Endothelial cell of umbilical vein (primary cell): ENCODE measurements at regions of chr7 and their contacts with region 1.

Region 1: GRCh38 chr7:15720849-15721471 is 34.5 kb upstream of the MEOX2 start:
- DNase-seq: peak; percentile 84
- H3K4me3 ChIP-seq: no peak overlapping the region
- H3K27ac ChIP-seq: peak overlapping the region; percentile 11
- H3K4me1 ChIP-seq: peaks cover 17% of the 10 kb centered on the region
- H3K27me3 ChIP-seq: no peaks in the 10 kb centered on the region
- CTCF ChIP-seq: peak; percentile 50 to 52
- POLR2A ChIP-seq: no peak

Region 2: DNA sequence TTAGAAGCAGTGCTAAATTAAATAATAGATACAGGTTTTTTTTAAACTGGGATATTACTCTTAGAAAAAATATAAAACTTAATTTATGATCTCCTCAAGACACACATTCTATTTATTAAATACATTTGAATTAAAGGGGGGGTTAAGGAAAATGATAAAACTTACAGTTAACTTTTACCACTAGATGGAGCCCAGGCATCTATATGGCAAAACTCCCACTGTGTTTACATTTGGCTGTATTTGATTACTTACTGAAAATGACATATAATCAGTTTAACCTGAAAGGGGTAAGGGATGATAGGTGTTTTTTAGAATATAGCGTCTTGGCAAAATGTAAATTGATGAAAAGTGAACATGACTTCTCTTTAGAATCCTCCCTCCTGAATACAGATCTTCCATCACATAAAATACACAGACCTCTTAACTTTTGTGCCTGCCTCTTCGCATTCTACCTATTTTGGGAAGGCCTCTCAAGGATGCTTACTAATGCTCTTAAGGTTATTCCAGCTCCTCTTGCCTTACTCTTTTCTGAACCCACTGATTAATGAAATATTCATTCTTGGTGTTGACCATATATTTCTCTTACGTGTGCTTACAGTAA is 394.8 kb before region 1 on chr7:
- CTCF ChIA-PET with region 1: interaction called, 33 read pairs
- POLR2A ChIA-PET with region 1: no interaction called
- dilution Hi-C with region 1: loop called (anchors 25 kb)
- intact Hi-C with region 1: loop called (anchors 1 kb)
- DNase-seq: peak; percentile 72
- H3K4me3 ChIP-seq: no peak overlapping the region
- H3K27ac ChIP-seq: no peak overlapping the region
- H3K4me1 ChIP-seq: no peaks in the 10 kb centered on the region
- H3K27me3 ChIP-seq: no peaks in the 10 kb centered on the region
- CTCF ChIP-seq: peak; percentile 33 to 45
- POLR2A ChIP-seq: no peak

Region 3: DNA sequence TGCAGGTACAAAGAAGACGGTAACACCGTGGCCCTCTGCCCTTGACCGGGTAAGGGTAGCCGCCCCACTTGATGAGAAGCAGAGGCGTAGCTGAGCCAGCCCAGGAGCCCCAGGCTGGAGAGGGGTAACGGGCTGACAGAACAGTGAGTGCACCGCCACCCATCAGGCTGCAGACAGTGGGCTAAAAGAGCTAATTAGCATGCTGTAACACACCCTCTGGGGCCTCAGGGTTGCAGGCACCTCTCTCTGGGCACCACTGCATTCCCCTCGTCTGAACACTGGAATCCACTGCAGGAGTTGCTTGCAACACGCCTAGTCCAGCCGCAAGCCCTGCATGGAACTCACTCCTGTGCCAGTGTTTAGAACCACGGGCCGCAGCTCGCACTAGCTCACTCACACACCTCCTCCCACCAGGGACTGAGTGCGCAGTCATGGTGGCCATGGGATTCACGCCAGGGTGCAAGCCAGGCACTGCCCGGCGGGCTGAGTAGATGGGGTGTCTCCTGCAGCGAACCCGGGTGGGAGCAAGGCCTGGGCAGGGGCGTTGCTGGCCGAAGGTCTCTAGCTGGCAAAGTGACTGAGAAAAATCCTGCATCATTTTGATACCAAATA is 195.2 kb before region 1 on chr7:
- CTCF ChIA-PET with region 1: interaction called, 11 read pairs
- POLR2A ChIA-PET with region 1: no interaction called
- dilution Hi-C with region 1: no loop called
- intact Hi-C with region 1: no loop called
- DNase-seq: no peak
- H3K4me3 ChIP-seq: no peak overlapping the region
- H3K27ac ChIP-seq: no peak overlapping the region
- H3K4me1 ChIP-seq: no peaks in the 10 kb centered on the region
- H3K27me3 ChIP-seq: no peaks in the 10 kb centered on the region
- CTCF ChIP-seq: no peak
- POLR2A ChIP-seq: no peak

Region 4: GRCh38 chr7:15678653-15679052 is 42.3 kb before region 1 on chr7:
- CTCF ChIA-PET with region 1: interaction called, 107 read pairs
- POLR2A ChIA-PET with region 1: no interaction called
- dilution Hi-C with region 1: no loop called
- intact Hi-C with region 1: no loop called
- DNase-seq: no peak
- H3K4me3 ChIP-seq: no peak overlapping the region
- H3K27ac ChIP-seq: no peak overlapping the region
- H3K4me1 ChIP-seq: peaks cover 4% of the 10 kb centered on the region
- H3K27me3 ChIP-seq: no peaks in the 10 kb centered on the region
- CTCF ChIP-seq: no peak
- POLR2A ChIP-seq: no peak

Region 5: GRCh38 chr7:15737601-15738000 is 16.6 kb after region 1 on chr7:
- CTCF ChIA-PET with region 1: interaction called, 31 read pairs
- POLR2A ChIA-PET with region 1: no interaction called
- dilution Hi-C with region 1: no loop called
- intact Hi-C with region 1: no loop called
- DNase-seq: peak; percentile 85
- H3K4me3 ChIP-seq: no peak overlapping the region
- H3K27ac ChIP-seq: no peak overlapping the region
- H3K4me1 ChIP-seq: no peaks in the 10 kb centered on the region
- H3K27me3 ChIP-seq: no peaks in the 10 kb centered on the region
- CTCF ChIP-seq: no peak
- POLR2A ChIP-seq: no peak

Region 6: GRCh38 chr7:16062269-16062668 is 341.3 kb after region 1 on chr7:
- CTCF ChIA-PET with region 1: interaction called, 21 read pairs
- POLR2A ChIA-PET with region 1: no interaction called
- dilution Hi-C with region 1: no loop called
- intact Hi-C with region 1: loop called (anchors 1 kb)
- DNase-seq: peak; percentile 95
- H3K4me3 ChIP-seq: no peak overlapping the region
- H3K27ac ChIP-seq: peak overlapping the region; percentile 88
- H3K4me1 ChIP-seq: peaks cover 34% of the 10 kb centered on the region
- H3K27me3 ChIP-seq: no peaks in the 10 kb centered on the region
- CTCF ChIP-seq: no peak
- POLR2A ChIP-seq: no peak

Region 7: DNA sequence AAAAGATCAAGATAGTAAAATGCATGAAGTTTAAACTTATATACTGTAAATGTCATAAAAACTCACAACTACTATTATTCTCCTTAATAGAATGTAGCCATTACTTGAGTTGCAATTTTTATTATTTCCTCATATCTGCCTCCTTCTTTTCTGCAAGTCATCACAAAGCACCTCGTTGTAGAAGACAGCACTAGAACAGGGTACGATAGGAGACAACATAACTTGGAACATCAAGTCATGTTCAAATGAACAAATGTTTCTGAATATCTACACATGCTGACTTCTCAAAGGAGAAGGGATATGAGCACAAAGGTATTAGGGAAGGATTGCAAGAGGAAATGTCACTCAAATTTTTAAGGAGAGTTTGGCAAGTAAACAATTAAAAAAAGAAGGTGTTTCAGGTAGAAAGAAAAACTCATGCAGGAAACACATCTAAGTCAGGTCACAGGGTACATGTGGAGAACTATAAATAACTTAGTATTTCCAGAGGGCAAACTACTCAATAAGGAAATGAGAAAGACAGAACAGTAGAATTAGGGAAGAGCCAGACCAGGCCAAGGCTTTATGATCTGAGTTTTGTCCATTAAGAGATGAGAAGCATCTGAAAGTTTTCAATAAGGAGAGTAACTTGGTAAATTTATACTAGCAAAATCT is 513.7 kb after region 1 on chr7:
- CTCF ChIA-PET with region 1: no interaction called
- POLR2A ChIA-PET with region 1: no interaction called
- dilution Hi-C with region 1: no loop called
- intact Hi-C with region 1: no loop called
- DNase-seq: no peak
- H3K4me3 ChIP-seq: no peak overlapping the region
- H3K27ac ChIP-seq: no peak overlapping the region
- H3K4me1 ChIP-seq: no peaks in the 10 kb centered on the region
- H3K27me3 ChIP-seq: no peaks in the 10 kb centered on the region
- CTCF ChIP-seq: no peak
- POLR2A ChIP-seq: no peak

Region 8: DNA sequence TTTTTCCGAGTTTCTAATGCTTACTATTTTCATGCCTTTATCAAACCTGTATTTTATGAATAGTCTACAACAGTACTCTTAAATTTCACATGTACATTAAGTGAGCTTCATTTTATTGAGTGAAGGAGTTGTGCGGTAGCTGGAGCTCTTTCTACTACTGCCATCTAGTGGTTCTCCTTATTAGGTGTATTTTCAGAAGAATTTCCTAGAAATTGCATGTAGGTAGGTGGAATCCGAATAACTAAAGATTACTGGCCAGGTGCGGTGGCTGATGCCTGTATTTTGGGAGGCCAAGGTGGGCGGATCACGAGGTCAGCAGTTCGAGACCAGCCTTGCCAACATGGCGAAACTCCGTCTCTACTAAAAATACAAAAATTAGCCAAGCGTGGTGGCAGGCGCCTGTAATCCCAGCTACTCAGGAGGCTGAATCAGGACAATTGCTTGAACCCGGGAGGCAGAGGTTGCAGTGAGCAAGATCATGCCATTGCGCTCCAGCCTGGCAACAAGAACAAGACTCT is 844.0 kb after region 1 on chr7:
- CTCF ChIA-PET with region 1: interaction called, 11 read pairs
- POLR2A ChIA-PET with region 1: no interaction called
- dilution Hi-C with region 1: no loop called
- intact Hi-C with region 1: no loop called
- DNase-seq: peak; percentile 64
- H3K4me3 ChIP-seq: no peak overlapping the region
- H3K27ac ChIP-seq: no peak overlapping the region
- H3K4me1 ChIP-seq: peaks cover 6% of the 10 kb centered on the region
- H3K27me3 ChIP-seq: no peaks in the 10 kb centered on the region
- CTCF ChIP-seq: peak; percentile 42 to 61
- POLR2A ChIP-seq: no peak